ENCODE measurements at regions of chr6 and their contacts with region 1.

Region 1: DNA sequence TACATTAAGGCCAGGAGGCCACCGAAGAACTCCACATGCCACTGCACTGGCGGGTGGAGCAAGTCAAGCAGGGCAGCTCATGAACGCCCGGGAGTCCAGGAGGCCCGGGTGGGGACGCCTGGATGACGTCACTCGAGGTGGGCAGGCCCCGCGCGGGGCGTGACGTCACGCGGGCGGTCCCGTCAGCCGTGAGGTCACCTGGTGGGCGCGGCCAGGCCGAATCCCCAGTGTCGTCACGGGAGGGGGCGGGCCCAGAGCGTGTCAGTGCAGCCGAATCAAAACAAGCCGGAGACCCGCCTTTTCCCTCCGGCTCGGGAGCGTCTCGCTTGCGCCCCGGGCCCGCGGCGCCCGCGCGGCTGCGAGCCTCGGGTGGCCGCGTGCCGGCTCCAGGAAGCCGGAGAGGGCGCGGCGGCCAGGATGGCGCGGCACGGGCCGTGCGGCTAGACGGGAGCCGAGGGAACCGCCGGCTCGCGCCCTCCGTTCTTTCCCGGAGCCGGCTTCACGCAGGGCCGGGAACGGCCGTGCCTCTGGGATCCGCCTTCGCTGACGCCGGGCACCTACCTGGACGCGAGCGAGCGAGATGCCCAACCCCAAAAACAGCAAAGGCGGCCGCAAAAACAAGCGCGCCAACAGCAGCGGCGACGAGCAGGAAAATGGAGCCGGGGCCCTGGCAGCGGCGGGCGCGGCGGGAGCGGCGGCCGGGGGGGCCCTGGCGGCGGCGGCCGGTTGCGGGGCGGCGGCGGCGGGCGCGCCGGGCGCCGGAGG is at the start of gene HECA:
- DNase-seq: peak; percentile 98 to 100 (median 99)
- ATAC-seq: peak; percentile 81
- H3K4me3 ChIP-seq: peak within 1 kb of the TSS; percentile 79 to 84
- H3K4me3 Mint-ChIP-seq: peak within 1 kb of the TSS; percentile 91
- H3K27ac ChIP-seq: peak within 1 kb of the TSS; percentile 96 to 97
- H3K27ac Mint-ChIP-seq: peak within 1 kb of the TSS; percentile 98
- H3K4me1 ChIP-seq: peaks cover 55% of the 10 kb centered on the region
- H3K4me1 Mint-ChIP-seq: peaks cover 67% of the 10 kb centered on the region
- H3K27me3 ChIP-seq: no peaks in the 10 kb centered on the region
- H3K27me3 Mint-ChIP-seq: no peaks in the 10 kb centered on the region
- CTCF ChIP-seq: no peak
- total RNA-seq, gene HECA: 231 to 234 TPM

Region 2: GRCh38 chr6:138773177-138774091 is 361.6 kb before region 1 on chr6 and contains the start of gene CCDC28A:
- CTCF ChIA-PET with region 1: no interaction called
- POLR2A ChIA-PET with region 1: no interaction called
- intact Hi-C with region 1: loop called (anchors 1 to 10 kb)
- DNase-seq: peak; percentile 87 to 97 (median 92)
- ATAC-seq: peak; percentile 84
- H3K4me3 ChIP-seq: peak within 1 kb of the TSS; percentile 68 to 90
- H3K4me3 Mint-ChIP-seq: peak within 1 kb of the TSS; percentile 100
- H3K27ac ChIP-seq: peak within 1 kb of the TSS; percentile 88 to 96
- H3K27ac Mint-ChIP-seq: peak within 1 kb of the TSS; percentile 100
- H3K4me1 ChIP-seq: peaks cover 19% of the 10 kb centered on the region
- H3K4me1 Mint-ChIP-seq: peaks cover 33% of the 10 kb centered on the region
- H3K27me3 ChIP-seq: no peaks in the 10 kb centered on the region
- H3K27me3 Mint-ChIP-seq: no peaks in the 10 kb centered on the region
- CTCF ChIP-seq: no peak
- total RNA-seq, gene CCDC28A: 38.2 to 39.4 TPM

Region 3: GRCh38 chr6:139109558-139109957 is 25.4 kb before region 1 on chr6:
- CTCF ChIA-PET with region 1: interaction called, 10 read pairs
- POLR2A ChIA-PET with region 1: interaction called, 24 read pairs
- intact Hi-C with region 1: loop called in 1 of 2 experiments (anchors 1 kb)
- DNase-seq: peak in 3 of 9 experiments; percentile 39 to 50 (median 42)
- ATAC-seq: no peak
- H3K4me3 ChIP-seq: no peak overlapping the region
- H3K4me3 Mint-ChIP-seq: no peak overlapping the region
- H3K27ac ChIP-seq: no peak overlapping the region
- H3K27ac Mint-ChIP-seq: peak overlapping the region; percentile 64
- H3K4me1 ChIP-seq: peaks cover 52% of the 10 kb centered on the region
- H3K4me1 Mint-ChIP-seq: peaks cover 73% of the 10 kb centered on the region
- H3K27me3 ChIP-seq: no peaks in the 10 kb centered on the region
- H3K27me3 Mint-ChIP-seq: no peaks in the 10 kb centered on the region
- CTCF ChIP-seq: peak; percentile 28

Region 4: DNA sequence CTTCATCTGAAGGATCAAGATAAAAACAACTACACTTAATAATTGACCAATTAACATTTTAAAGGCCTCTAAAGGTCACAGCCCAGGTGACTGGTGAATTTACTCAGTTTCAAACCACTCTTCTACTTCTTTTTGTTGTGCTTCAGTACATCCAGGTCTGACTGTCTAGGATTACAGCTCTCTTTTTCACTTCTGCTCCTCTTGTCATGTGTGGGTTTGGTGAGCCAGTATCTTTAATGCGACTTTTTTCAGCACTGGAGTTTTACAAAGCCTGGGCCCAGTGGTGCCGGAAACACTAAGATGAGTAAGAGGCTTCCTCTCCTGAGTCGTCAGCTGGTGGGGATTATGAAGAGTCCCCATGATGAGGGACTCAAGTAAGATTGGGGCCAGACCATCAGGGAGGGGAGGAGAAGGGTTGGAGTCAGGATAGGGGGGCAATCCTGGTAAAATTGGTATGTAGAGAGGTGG is 26.9 kb after region 1 on chr6:
- CTCF ChIA-PET with region 1: interaction called, 13 read pairs
- POLR2A ChIA-PET with region 1: interaction called, 41 read pairs
- intact Hi-C with region 1: loop called (anchors 1 kb)
- DNase-seq: peak in 8 of 9 experiments; percentile 48 to 85 (median 71)
- ATAC-seq: peak; percentile 60
- H3K4me3 ChIP-seq: peak overlapping the region in 1 of 2 experiments; percentile 1
- H3K4me3 Mint-ChIP-seq: peak overlapping the region; percentile 70
- H3K27ac ChIP-seq: peak overlapping the region; percentile 52 to 68
- H3K27ac Mint-ChIP-seq: peak overlapping the region; percentile 93
- H3K4me1 ChIP-seq: peaks cover 86% of the 10 kb centered on the region
- H3K4me1 Mint-ChIP-seq: peaks cover 92% of the 10 kb centered on the region
- H3K27me3 ChIP-seq: no peaks in the 10 kb centered on the region
- H3K27me3 Mint-ChIP-seq: no peaks in the 10 kb centered on the region
- CTCF ChIP-seq: no peak

Region 5: DNA sequence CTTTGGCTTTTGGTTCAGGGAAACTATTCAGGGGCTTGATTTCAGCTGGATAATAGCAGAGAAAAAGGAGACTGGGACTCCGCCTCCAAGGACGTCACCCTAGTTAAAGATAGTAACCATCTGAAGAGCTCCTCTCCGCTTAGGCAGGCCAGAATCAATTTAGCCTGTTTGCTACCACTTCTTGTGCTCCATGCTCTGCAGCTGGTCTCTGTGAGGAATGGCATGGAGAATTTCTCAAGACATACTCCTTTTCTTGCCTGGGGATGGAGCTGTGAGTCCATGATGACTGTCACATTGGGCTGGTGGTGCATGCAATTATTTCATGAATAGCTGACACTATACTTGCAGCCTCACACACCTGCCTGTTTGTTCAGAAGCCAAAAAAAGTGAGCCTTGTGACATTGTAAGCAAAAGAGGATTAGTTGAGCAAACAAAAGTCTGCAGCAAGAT is 95.4 kb after region 1 on chr6:
- CTCF ChIA-PET with region 1: no interaction called
- POLR2A ChIA-PET with region 1: no interaction called
- intact Hi-C with region 1: no loop called
- DNase-seq: peak in 2 of 9 experiments; percentile 17 to 27
- ATAC-seq: no peak
- H3K4me3 ChIP-seq: no peak overlapping the region
- H3K4me3 Mint-ChIP-seq: no peak overlapping the region
- H3K27ac ChIP-seq: no peak overlapping the region
- H3K27ac Mint-ChIP-seq: peak overlapping the region; percentile 10
- H3K4me1 ChIP-seq: no peaks in the 10 kb centered on the region
- H3K4me1 Mint-ChIP-seq: peaks cover 9% of the 10 kb centered on the region
- H3K27me3 ChIP-seq: no peaks in the 10 kb centered on the region
- H3K27me3 Mint-ChIP-seq: no peaks in the 10 kb centered on the region
- CTCF ChIP-seq: no peak

Region 6: DNA sequence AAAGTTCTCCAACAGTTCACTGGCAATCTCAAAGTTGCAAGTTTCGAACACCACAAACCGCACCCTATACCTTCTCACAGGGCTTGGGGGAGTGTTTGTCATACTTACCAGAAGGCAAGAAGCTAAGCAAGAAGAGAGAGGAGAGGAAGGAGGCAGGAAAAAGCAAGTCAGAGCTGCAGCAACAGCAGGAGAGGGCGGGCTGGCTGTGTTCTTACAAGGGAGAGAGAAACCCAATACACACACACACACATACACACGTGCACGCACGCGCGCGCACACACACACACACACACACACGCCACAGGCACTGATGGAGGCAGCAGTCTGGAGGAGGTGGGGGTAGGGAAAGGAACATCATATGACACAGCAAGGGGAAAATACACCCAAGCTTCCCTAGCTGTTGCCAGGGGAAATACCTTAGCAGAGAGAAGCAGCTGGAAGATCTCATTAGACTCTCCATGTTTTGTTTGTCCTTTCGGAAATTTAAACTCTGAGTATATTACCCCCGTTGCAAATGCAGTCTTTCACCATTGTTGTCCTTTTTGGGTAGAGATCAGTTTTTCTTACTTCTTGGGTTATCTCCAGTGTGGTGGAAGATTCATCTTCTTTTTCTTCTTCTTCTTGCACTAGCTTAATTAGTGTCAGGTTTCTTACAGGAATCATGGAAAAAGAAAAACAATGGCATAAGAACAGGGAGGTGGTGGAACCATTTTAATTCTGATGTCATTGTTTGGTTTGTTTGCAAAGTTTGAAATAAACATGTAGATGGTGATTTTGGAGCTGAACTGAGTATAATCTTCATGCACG is 157.0 kb after region 1 on chr6 and contains the start of gene TXLNB:
- CTCF ChIA-PET with region 1: interaction called, 3 read pairs
- POLR2A ChIA-PET with region 1: interaction called, 10 read pairs
- intact Hi-C with region 1: no loop called
- DNase-seq: peak; percentile 55 to 92 (median 80)
- ATAC-seq: peak; percentile 85
- H3K4me3 ChIP-seq: peak within 1 kb of the TSS; percentile 16 to 34
- H3K4me3 Mint-ChIP-seq: peak within 1 kb of the TSS; percentile 77
- H3K27ac ChIP-seq: peak within 1 kb of the TSS; percentile 77 to 82
- H3K27ac Mint-ChIP-seq: peak within 1 kb of the TSS; percentile 96
- H3K4me1 ChIP-seq: peaks cover 39% of the 10 kb centered on the region
- H3K4me1 Mint-ChIP-seq: peaks cover 66% of the 10 kb centered on the region
- H3K27me3 ChIP-seq: no peaks in the 10 kb centered on the region
- H3K27me3 Mint-ChIP-seq: no peaks in the 10 kb centered on the region
- CTCF ChIP-seq: no peak
- total RNA-seq, gene TXLNB: 0.22 to 0.72 TPM

Measured in CD8-positive, alpha-beta T cell (primary cell).